ENCODE measurements at regions of chr12 and their contacts with region 1.

Region 1: GRCh38 chr12:109963743-109964429 is 32.3 kb downstream of the GIT2 start:
- DNase-seq: no peak

Region 2: DNA sequence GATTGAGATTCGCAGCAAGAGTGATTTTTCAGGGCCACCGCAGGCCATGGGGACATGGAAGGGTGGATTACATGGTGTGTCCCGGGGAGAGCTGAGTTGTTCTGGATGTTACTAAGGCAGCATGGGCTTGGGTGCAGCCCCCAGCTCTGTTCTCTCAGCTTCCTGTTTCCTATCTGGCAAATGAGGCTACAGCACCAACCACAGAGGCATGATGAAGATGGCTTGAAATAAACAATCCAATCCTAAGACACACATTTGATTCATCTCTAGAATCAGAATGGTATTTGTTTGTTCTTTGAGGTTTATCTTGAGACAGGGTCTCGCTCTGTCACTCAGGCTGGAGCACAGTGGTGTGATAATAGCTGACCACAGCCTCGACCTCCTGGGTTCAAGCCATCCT is 105.1 kb before region 1 on chr12:
- in situ Hi-C with region 1: loop called (anchors 10 kb)
- DNase-seq: no peak

Region 3: GRCh38 chr12:110056147-110056484 is 92.2 kb after region 1 on chr12:
- in situ Hi-C with region 1: loop called (anchors 5 kb)
- DNase-seq: no peak

Measured in G401 (cell line).